ENCODE measurements at regions of chr15 and their contacts with region 1.

Region 1: DNA sequence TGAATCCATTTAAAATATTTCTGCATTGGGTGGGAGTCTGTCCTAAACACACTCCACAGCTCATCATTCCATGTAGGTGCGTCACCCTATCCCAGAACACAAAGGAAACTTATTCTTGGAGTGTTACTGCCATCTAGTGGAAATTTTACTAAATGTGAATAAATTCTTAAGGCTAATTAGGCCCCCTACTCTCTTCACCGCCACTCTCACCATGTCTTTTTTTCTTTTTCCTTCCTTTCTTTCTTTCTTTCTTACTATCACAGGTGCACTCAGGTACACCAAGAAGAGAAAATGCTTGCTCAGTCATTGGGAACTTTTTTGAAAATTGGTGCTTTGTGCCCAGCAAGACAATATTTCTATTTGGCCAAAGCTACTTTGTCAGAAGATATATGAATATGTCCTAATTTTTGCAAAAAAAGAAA is 26.4 kb upstream of the ATP8B4 start:
- DNase-seq: peak; percentile 60 to 79 (median 68)
- ATAC-seq: peak; percentile 87
- H3K4me3 ChIP-seq: no peak overlapping the region
- H3K27ac ChIP-seq: no peak overlapping the region
- H3K4me1 ChIP-seq: peaks cover 0 to 5% of the 10 kb centered on the region in 2 experiments; a peak in 3 of 5 replicates
- H3K27me3 ChIP-seq: no peaks in the 10 kb centered on the region
- CTCF ChIP-seq: peak; percentile 38 to 66 (median 45); a peak in 4 of 6 replicates
- EP300 ChIP-seq: no peak
- POLR2A ChIP-seq: no peak
- RAD21 ChIP-seq: peak; percentile 84 to 88

Region 2: GRCh38 chr15:48352474-48353072 is 1792.9 kb before region 1 on chr15:
- CTCF ChIA-PET with region 1: no interaction called
- POLR2A ChIA-PET with region 1: no interaction called
- in situ Hi-C with region 1: loop called (anchors 25 kb)
- intact Hi-C with region 1: no loop called
- DNase-seq: peak; percentile 56 to 83 (median 62)
- ATAC-seq: peak; percentile 96
- H3K4me3 ChIP-seq: no peak overlapping the region
- H3K27ac ChIP-seq: no peak overlapping the region
- H3K4me1 ChIP-seq: no peaks in the 10 kb centered on the region; a peak in 2 of 5 replicates
- H3K27me3 ChIP-seq: no peaks in the 10 kb centered on the region
- CTCF ChIP-seq: peak; percentile 72 to 84 (median 79)
- EP300 ChIP-seq: no peak
- POLR2A ChIP-seq: no peak
- RAD21 ChIP-seq: peak; percentile 69 to 85

Region 3: DNA sequence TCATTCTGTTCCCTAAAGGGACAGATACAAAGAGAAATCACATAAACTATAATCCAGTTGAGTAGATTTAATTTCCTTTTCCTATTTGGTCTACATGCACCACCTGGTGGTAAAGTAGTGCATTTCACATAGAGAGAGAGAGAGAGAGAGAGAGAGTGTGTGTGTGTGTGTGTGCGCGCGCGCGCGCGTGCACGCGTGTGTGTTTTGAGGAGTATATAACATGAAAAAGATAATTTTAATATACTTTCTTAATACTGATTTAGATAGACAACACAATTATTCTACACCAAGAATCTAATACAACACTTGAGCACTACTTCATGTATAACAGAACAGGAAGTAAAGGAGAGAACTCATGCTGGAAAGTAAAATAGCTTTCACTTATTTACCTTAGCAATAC is 723.5 kb before region 1 on chr15:
- CTCF ChIA-PET with region 1: no interaction called
- POLR2A ChIA-PET with region 1: no interaction called
- in situ Hi-C with region 1: no loop called
- intact Hi-C with region 1: loop called (anchors 10 kb)
- DNase-seq: peak; percentile 24 to 63 (median 32)
- ATAC-seq: peak; percentile 63
- H3K4me3 ChIP-seq: no peak overlapping the region
- H3K27ac ChIP-seq: no peak overlapping the region
- H3K4me1 ChIP-seq: no peaks in the 10 kb centered on the region
- H3K27me3 ChIP-seq: no peaks in the 10 kb centered on the region
- CTCF ChIP-seq: peak; percentile 67 to 88 (median 78)
- EP300 ChIP-seq: no peak
- POLR2A ChIP-seq: no peak
- RAD21 ChIP-seq: peak; percentile 64 to 90

Region 4: GRCh38 chr15:50051803-50052419 is 93.6 kb before region 1 on chr15:
- CTCF ChIA-PET with region 1: no interaction called
- POLR2A ChIA-PET with region 1: no interaction called
- in situ Hi-C with region 1: no loop called
- intact Hi-C with region 1: loop called (anchors 5 kb)
- DNase-seq: peak; percentile 19 to 50 (median 22)
- ATAC-seq: peak; percentile 84
- H3K4me3 ChIP-seq: no peak overlapping the region
- H3K27ac ChIP-seq: no peak overlapping the region
- H3K4me1 ChIP-seq: peaks cover 0 to 11% of the 10 kb centered on the region in 2 experiments; a peak in 3 of 5 replicates
- H3K27me3 ChIP-seq: no peaks in the 10 kb centered on the region
- CTCF ChIP-seq: peak; percentile 60 to 73 (median 62)
- EP300 ChIP-seq: no peak
- POLR2A ChIP-seq: no peak
- RAD21 ChIP-seq: peak; percentile 58 to 82

Region 5: GRCh38 chr15:50169095-50169411 is 23.6 kb after region 1 on chr15:
- CTCF ChIA-PET with region 1: no interaction called
- POLR2A ChIA-PET with region 1: no interaction called
- in situ Hi-C with region 1: no loop called
- intact Hi-C with region 1: no loop called
- DNase-seq: no peak
- ATAC-seq: no peak
- H3K4me3 ChIP-seq: no peak overlapping the region
- H3K27ac ChIP-seq: no peak overlapping the region
- H3K4me1 ChIP-seq: peaks cover 0 to 4% of the 10 kb centered on the region in 2 experiments; a peak in 2 of 5 replicates
- H3K27me3 ChIP-seq: no peaks in the 10 kb centered on the region
- CTCF ChIP-seq: no peak
- EP300 ChIP-seq: no peak
- POLR2A ChIP-seq: no peak
- RAD21 ChIP-seq: no peak

Region 6: GRCh38 chr15:50260969-50261496 is 115.6 kb after region 1 on chr15:
- CTCF ChIA-PET with region 1: no interaction called
- POLR2A ChIA-PET with region 1: no interaction called
- in situ Hi-C with region 1: no loop called
- intact Hi-C with region 1: loop called (anchors 5 kb)
- DNase-seq: peak; percentile 85 to 90 (median 88)
- ATAC-seq: peak; percentile 85
- H3K4me3 ChIP-seq: no peak overlapping the region
- H3K27ac ChIP-seq: peak overlapping the region; percentile 85
- H3K4me1 ChIP-seq: peaks cover 58 to 59% of the 10 kb centered on the region in 2 experiments
- H3K27me3 ChIP-seq: no peaks in the 10 kb centered on the region
- CTCF ChIP-seq: 0 out of 6 replicates have a peak, but pooled peaks of 1 of the 3 experiments have one; percentile 3
- EP300 ChIP-seq: peak; percentile 99
- POLR2A ChIP-seq: no peak
- RAD21 ChIP-seq: no peak; a peak in 2 of 4 replicates

Region 7: GRCh38 chr15:50908210-50909009 is 762.9 kb after region 1 on chr15 and contains the start of gene AP4E1:
- CTCF ChIA-PET with region 1: no interaction called
- POLR2A ChIA-PET with region 1: no interaction called
- in situ Hi-C with region 1: no loop called
- intact Hi-C with region 1: loop called (anchors 2 kb)
- DNase-seq: peak; percentile 76 to 95 (median 79)
- ATAC-seq: peak; percentile 82
- H3K4me3 ChIP-seq: peak within 1 kb of the TSS; percentile 98
- H3K27ac ChIP-seq: peak within 1 kb of the TSS; percentile 92
- H3K4me1 ChIP-seq: peaks cover 0 to 12% of the 10 kb centered on the region in 2 experiments; a peak in 2 of 5 replicates
- H3K27me3 ChIP-seq: no peaks in the 10 kb centered on the region
- CTCF ChIP-seq: peak; percentile 91 to 97 (median 93)
- EP300 ChIP-seq: peak; percentile 67
- POLR2A ChIP-seq: peak; percentile 88
- RAD21 ChIP-seq: peak; percentile 87 to 96
- polyA plus RNA-seq, gene AP4E1: 1.3 to 2.2 TPM